ENCODE measurements at regions of chr2 and their contacts with region 1.

Region 1: GRCh38 chr2:181891258-181891965 is at the start of gene ITPRID2:
- DNase-seq: peak; percentile 95 to 97 (median 95)
- ATAC-seq: peak; percentile 94
- H3K4me3 ChIP-seq: peak within 1 kb of the TSS; percentile 88
- H3K27ac ChIP-seq: peak within 1 kb of the TSS; percentile 96
- H3K4me1 ChIP-seq: peaks cover 7 to 23% of the 10 kb centered on the region in 2 experiments; a peak in 4 of 5 replicates
- H3K27me3 ChIP-seq: no peaks in the 10 kb centered on the region
- CTCF ChIP-seq: peak; percentile 7 to 9 (median 8); a peak in 2 of 6 replicates
- EP300 ChIP-seq: no peak; the same call in 1 of the 2 replicates
- POLR2A ChIP-seq: no peak; the same call in 1 of the 2 replicates
- RAD21 ChIP-seq: peak; percentile 24 to 30; a peak in 3 of 4 replicates
- polyA plus RNA-seq, gene ITPRID2: 18.5 to 20.3 TPM

Region 2: DNA sequence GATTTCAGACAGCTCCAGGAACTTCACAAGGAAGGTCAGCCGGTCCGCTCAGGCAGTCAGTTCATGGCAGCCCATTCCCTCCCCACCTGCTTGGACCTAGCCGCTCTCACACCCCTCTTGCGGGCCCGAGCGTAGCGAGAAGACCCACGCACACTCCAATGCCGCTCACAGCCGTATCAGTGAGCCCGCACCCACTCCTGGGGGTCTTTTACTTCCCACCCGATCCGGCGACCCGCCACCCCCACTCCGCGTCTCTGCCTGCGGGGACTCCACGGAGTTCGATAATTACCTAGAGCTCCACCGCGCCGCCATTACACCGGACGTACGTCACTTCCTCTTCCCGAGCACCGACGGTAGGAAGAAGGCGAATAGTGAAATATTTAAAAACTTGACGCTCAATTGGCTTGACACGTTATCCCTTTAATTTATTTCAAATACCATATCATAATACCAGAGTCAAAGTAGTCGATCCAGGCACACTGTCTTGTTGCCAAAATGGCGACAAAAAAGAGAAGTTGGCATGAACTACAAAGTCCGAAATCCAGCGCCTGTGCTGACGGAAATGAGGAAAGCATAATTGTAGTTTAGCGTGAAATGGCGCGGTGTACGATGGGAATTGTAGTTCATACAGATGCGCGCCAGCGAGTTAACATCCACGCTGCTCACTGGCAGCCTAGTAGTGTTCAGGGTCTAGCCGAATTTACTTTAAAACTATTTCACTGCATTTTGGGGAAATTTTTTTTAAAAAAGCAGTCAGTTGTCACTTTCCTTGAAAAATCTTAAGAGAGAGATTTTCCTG is 1884.4 kb before region 1 on chr2 and contains the start of gene CWC22:
- CTCF ChIA-PET with region 1: no interaction called
- POLR2A ChIA-PET with region 1: no interaction called
- in situ Hi-C with region 1: no loop called
- intact Hi-C with region 1: loop called (anchors 10 kb)
- DNase-seq: peak; percentile 76 to 96 (median 79)
- ATAC-seq: peak; percentile 93
- H3K4me3 ChIP-seq: peak within 1 kb of the TSS; percentile 65
- H3K27ac ChIP-seq: peak within 1 kb of the TSS; percentile 100
- H3K4me1 ChIP-seq: peaks cover 0 to 25% of the 10 kb centered on the region in 2 experiments; a peak in 4 of 5 replicates
- H3K27me3 ChIP-seq: no peaks in the 10 kb centered on the region
- CTCF ChIP-seq: peak in 1 of 3 experiments; percentile 11; a peak in 1 of 6 replicates
- EP300 ChIP-seq: peak; percentile 21; the same call in 1 of the 2 replicates
- POLR2A ChIP-seq: peak; percentile 95
- RAD21 ChIP-seq: 0 out of 4 replicates have a peak, but pooled peaks of 1 of the 2 experiments have one; percentile 14
- polyA plus RNA-seq, gene CWC22: 40.6 to 53.9 TPM

Region 3: DNA sequence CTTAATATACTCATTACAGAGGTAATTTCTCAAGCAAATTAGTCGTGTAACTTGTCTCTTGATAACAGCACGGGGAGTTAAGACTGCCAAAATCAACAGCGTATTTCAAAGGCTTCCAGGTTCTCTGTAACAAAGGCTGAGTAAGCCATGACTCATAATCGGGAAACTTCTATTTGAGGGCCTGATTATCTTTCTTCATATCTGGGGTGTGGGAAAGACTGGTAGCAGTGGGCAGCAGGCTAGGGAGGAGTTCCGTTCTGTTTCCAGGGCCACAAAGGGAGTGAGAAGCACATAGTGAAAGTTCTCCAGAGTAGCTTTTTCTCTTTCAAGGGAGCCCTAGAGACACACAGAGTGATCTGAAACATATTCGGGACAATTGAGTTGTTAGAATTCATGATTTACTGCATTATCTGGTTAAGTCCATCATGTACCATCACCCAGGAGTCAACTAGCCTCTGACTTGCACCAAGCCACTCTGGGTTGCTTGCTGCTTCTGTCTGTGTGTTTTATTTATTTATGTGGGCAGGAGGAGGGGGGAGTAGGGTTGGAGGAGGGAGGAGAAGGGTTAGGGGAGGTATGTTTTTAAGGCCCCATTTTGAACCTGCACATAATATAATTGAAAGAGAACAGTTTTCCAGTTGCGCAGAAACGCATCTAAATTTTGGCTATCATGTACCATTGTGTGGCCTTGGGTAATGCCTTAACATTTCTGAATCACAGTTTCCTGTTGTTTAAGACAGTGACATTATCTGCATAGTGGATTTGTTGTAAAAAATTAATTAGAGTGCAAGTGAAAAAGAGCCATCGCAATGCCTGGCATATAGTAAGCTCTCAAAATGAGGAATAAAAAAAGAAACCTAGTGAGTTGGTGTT is 80.4 kb before region 1 on chr2:
- CTCF ChIA-PET with region 1: no interaction called
- POLR2A ChIA-PET with region 1: no interaction called
- in situ Hi-C with region 1: no loop called
- intact Hi-C with region 1: loop called (anchors 5 kb)
- DNase-seq: peak; percentile 22 to 77 (median 44)
- ATAC-seq: peak; percentile 78
- H3K4me3 ChIP-seq: no peak overlapping the region
- H3K27ac ChIP-seq: peak overlapping the region; percentile 61; the same call in 1 of the 3 replicates
- H3K4me1 ChIP-seq: peaks cover 0 to 29% of the 10 kb centered on the region in 2 experiments; a peak in 3 of 5 replicates
- H3K27me3 ChIP-seq: no peaks in the 10 kb centered on the region
- CTCF ChIP-seq: no peak
- EP300 ChIP-seq: peak; percentile 61
- POLR2A ChIP-seq: no peak
- RAD21 ChIP-seq: no peak

Region 4: DNA sequence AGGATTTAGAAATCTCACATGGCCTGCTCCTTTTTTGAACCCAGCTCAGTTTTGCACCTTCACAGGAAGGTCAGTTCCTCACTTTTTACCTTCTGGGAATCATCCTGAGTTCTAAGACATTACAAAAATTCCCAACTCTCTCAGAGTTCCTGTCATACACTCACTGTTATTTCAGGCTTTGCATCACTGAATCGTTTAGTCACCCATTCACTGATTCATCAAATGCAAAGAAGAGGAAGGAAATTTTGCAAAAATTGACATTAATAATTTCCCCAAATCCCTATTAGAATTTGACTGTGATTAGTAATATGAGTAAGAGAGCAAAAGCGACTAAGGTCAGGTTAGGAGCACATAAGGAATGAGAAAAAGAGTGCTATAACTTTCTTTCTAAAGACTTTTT is 337.9 kb after region 1 on chr2:
- CTCF ChIA-PET with region 1: no interaction called
- POLR2A ChIA-PET with region 1: no interaction called
- in situ Hi-C with region 1: no loop called
- intact Hi-C with region 1: no loop called
- DNase-seq: no peak
- ATAC-seq: no peak
- H3K4me3 ChIP-seq: no peak overlapping the region
- H3K27ac ChIP-seq: no peak overlapping the region
- H3K4me1 ChIP-seq: no peaks in the 10 kb centered on the region
- H3K27me3 ChIP-seq: no peaks in the 10 kb centered on the region
- CTCF ChIP-seq: no peak
- EP300 ChIP-seq: no peak
- POLR2A ChIP-seq: no peak
- RAD21 ChIP-seq: no peak

Measured in K562 (cell line).